ENCODE measurements at regions of chr12 and their contacts with region 1.

Region 1: GRCh38 chr12:115998119-115998633 is 279.3 kb downstream of the MED13L start:
- DNase-seq: peak; percentile 22
- H3K4me3 Mint-ChIP-seq: no peak overlapping the region
- H3K27ac Mint-ChIP-seq: no peak overlapping the region
- H3K4me1 Mint-ChIP-seq: no peaks in the 10 kb centered on the region
- H3K27me3 Mint-ChIP-seq: no peaks in the 10 kb centered on the region
- CTCF ChIP-seq: peak; percentile 79

Region 2: DNA sequence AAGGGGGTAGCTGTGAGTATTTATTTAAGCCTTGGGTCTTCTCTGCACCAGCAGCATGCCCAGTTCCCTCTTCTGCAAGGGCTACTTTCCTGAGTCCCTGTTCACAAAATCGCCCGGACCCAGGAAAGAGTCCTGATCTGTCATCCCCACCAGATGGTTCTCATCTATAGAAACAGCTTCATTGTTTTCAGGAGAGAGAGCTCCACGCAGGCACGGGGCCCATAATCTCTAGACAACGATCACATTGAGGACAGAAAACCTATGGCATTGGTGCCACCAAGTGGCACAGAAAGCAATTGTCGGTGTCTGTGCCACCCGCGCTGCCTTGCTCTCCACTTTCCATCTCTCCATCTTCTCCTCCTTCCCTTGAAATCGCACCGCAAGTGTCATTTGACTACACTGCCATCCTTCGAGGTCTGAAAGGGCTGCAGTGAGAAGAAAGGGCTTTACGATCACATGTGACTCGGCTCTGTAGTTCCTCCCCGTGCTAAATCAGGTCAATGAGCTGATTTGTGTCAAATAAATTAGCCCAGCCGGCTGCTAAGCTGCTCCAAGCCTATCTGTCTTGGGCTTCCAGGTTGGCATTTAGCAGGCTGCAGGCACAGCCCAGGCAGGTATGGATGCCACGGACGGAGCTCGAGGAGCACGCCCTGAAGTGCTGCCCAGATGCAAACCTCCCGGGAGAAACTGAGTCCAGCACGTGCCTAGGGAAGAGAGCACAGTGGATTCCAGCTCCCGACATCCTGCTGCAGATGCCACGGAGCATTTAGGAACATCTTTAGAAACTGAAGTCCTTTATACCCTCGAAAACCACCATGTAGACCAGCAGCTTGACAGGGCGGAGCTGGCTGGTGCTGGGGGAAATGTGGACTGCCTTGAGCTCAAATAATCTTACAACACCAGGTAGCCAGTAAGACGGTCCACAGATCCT is 710.9 kb after region 1 on chr12:
- CTCF ChIA-PET with region 1: no interaction called
- intact Hi-C with region 1: loop called (anchors 1 kb)
- DNase-seq: peak; percentile 67
- H3K4me3 Mint-ChIP-seq: no peak overlapping the region
- H3K27ac Mint-ChIP-seq: no peak overlapping the region
- H3K4me1 Mint-ChIP-seq: peaks cover 11% of the 10 kb centered on the region
- H3K27me3 Mint-ChIP-seq: no peaks in the 10 kb centered on the region
- CTCF ChIP-seq: peak; percentile 51

Region 3: DNA sequence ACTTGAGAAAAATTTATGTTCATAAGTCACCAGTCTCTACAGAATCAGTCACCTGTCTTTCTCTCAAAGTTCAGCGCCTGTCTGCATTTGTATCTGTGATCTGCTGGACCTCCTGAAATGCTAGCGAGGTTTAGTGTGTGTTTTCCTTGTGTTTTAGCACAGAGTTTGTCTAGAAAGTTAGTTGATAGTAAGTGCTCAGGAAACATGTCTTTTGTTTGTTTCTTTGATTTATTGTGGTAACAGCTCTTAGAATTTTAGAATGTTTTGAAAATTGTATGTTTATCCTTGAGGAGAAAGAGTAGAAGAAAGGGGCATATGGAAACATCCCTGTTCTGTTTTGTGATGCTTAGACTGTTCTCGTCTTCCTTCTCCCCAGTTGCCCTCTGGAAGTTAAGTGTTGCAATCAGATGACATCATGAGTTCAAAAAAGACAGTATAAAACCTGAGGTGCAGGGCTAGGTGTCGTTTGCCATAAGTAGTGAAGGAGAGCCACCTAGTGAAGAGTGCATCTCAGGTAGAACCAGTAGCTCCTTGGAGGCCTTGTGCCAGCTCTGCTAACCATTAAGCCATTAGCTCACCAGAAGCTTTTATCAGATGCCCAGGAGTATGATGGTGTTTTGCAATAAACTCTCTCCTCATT is 957.3 kb after region 1 on chr12:
- CTCF ChIA-PET with region 1: no interaction called
- intact Hi-C with region 1: no loop called
- DNase-seq: peak; percentile 72
- H3K4me3 Mint-ChIP-seq: no peak overlapping the region
- H3K27ac Mint-ChIP-seq: peak overlapping the region; percentile 69
- H3K4me1 Mint-ChIP-seq: peaks cover 28% of the 10 kb centered on the region
- H3K27me3 Mint-ChIP-seq: no peaks in the 10 kb centered on the region
- CTCF ChIP-seq: no peak